ENCODE measurements at regions of chr1 and their contacts with region 1.

Region 1: DNA sequence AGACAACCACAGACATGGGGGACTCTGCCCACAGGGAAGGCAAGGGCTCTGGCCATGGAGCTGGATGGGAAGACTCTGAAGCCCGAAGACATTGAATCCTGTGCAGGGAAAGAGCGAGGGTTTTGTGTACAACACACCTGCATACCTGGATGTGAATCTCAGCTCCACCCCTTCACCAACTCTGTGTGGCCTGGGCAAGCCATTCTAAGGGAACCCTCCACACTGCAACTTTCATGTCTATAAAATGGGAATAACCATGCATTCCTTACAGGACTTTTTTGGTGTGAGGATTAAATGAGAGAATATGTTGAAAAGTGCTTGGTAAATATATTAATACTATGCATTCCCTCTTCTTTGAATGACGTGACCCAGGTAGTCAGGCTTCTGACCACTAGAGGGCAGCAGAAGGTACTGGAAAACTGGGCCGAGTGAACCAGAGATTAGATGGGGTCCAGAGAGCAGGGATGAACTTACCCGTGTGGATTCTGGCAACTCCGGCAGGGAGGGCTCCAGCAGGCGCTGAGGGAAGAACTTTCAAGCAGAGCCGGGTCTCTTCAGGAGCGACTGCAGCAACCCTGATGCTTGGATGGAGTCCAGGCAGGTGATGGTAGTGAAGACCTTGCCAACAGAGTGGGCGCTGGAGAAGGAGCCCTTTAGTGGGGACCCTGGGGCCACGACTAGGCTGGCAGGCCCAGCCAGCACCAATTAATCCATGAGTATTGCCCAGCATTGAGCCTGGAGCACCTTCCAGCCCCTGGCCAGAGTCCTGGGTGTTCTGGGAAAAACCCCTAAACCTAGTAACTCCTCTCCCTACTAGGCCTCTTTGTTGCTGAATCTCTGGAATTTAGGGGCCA is 834 bp upstream of the ELF3 start:
- DNase-seq: peak; percentile 68
- H3K4me3 ChIP-seq: no peak overlapping the region
- H3K27ac ChIP-seq: no peak overlapping the region
- H3K4me1 ChIP-seq: peaks cover 9% of the 10 kb centered on the region
- CTCF ChIP-seq: peak; percentile 95

Region 2: GRCh38 chr1:201348211-201348566 is 661.4 kb before region 1 on chr1:
- CTCF ChIA-PET with region 1: no interaction called
- POLR2A ChIA-PET with region 1: no interaction called
- intact Hi-C with region 1: no loop called
- DNase-seq: peak; percentile 49
- H3K4me3 ChIP-seq: no peak overlapping the region
- H3K27ac ChIP-seq: no peak overlapping the region
- H3K4me1 ChIP-seq: no peaks in the 10 kb centered on the region
- CTCF ChIP-seq: peak; percentile 78

Region 3: GRCh38 chr1:202122639-202123335 is 113.2 kb after region 1 on chr1 and contains the start of gene GPR37L1:
- CTCF ChIA-PET with region 1: no interaction called
- POLR2A ChIA-PET with region 1: no interaction called
- intact Hi-C with region 1: loop called (anchors 1 kb)
- DNase-seq: no peak
- H3K4me3 ChIP-seq: no peak within 1 kb of the TSS
- H3K27ac ChIP-seq: no peak within 1 kb of the TSS
- H3K4me1 ChIP-seq: no peaks in the 10 kb centered on the region
- CTCF ChIP-seq: no peak
- total RNA-seq, gene GPR37L1: 0.03 TPM in 1 of 2 replicates, not detected in the other

Region 4: DNA sequence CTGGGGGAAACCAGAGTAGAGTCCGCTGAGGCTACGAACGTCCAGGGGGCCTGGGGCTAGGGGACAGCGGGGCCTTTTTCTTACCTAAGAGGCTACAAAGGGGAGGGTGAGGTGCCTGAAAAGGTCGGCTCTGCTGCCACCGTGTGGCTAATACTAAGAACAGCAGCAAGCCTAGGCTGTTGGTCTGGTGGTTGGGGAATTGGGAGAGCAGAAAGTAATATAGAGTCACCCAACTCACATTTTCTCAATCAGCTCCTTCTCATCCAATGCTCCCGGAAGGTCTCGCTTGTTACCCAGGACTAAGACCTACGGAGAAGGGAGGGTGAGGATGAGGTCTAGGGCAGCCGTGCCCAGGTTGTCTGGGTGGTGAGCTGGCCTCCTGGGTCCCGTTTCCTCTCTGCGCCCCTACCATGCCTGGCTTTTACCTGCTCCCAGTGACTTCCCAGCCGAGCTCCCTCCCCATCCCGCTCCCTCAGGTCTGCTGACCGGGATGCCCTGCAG is 125.7 kb after region 1 on chr1:
- CTCF ChIA-PET with region 1: no interaction called
- POLR2A ChIA-PET with region 1: interaction called, 3 read pairs
- intact Hi-C with region 1: loop called (anchors 1 kb)
- DNase-seq: peak; percentile 73
- H3K4me3 ChIP-seq: no peak overlapping the region
- H3K27ac ChIP-seq: no peak overlapping the region
- H3K4me1 ChIP-seq: no peaks in the 10 kb centered on the region
- CTCF ChIP-seq: peak; percentile 88

Region 5: DNA sequence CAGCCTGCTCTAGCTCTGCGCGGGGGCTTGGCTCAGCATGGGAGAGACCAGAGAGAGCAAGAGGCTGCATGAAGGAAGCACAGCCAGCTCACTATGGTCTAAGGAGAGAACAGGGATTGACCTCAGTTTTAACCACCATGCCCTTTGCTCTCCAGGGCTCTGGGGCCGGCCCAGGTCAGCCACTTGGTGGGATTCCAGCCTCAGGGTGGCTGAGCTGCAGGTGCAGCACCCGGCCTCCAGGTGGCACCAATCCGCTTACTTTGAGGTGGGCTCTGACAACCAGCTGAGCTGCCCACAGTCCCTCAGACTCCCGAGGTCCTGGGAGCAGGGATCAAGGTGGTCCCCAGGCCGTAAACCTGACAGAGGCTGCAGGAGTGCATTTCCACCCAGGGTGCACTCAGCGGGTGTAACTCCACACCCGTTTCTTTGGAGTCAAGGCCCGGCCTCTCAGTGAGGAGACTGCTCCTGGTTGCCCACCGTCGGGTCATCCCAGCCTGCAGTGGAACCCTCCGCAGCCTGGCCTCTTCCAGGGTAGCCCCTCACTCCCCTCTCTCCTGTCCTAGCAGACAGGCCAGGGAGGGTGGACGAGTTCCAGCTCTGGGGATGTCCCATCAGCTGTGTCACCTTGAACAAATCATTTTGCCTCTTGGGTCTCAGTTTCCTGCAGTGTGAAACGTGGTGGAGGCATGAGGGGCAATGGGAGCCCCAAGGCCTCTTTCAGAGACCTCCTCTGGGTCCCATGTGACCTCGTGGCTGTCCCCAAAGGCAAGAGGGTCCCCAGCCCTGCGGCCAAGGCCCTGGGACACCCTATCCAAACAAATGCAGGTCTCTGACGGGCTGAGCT is 183.4 kb after region 1 on chr1:
- CTCF ChIA-PET with region 1: no interaction called
- POLR2A ChIA-PET with region 1: no interaction called
- intact Hi-C with region 1: no loop called
- DNase-seq: peak; percentile 65
- H3K4me3 ChIP-seq: no peak overlapping the region
- H3K27ac ChIP-seq: no peak overlapping the region
- H3K4me1 ChIP-seq: peaks cover 11% of the 10 kb centered on the region
- CTCF ChIP-seq: peak; percentile 89